HEK293 (cell line): ENCODE measurements at regions of chr20 and their contacts with region 1.

Region 1: GRCh38 chr20:56551571-56551970 is 18.5 kb downstream of the FAM209B start:
- H3K4me3 ChIP-seq: no peak overlapping the region
- H3K27ac ChIP-seq: no peak overlapping the region
- H3K4me1 ChIP-seq: peaks cover 7% of the 10 kb centered on the region; the same call in 1 of the 2 replicates
- CTCF ChIP-seq: no peak

Region 2: GRCh38 chr20:56566271-56566981 is 14.9 kb after region 1 on chr20:
- CTCF ChIA-PET with region 1: interaction called, 11 read pairs
- POLR2A ChIA-PET with region 1: no interaction called
- H3K4me3 ChIP-seq: no peak overlapping the region
- H3K27ac ChIP-seq: no peak overlapping the region
- H3K4me1 ChIP-seq: peaks cover 4% of the 10 kb centered on the region; the same call in 1 of the 2 replicates
- CTCF ChIP-seq: no peak

Region 3: GRCh38 chr20:56574531-56575142 is 23.1 kb after region 1 on chr20:
- CTCF ChIA-PET with region 1: interaction called, 69 read pairs
- POLR2A ChIA-PET with region 1: no interaction called
- H3K4me3 ChIP-seq: no peak overlapping the region
- H3K27ac ChIP-seq: no peak overlapping the region
- H3K4me1 ChIP-seq: no peaks in the 10 kb centered on the region
- CTCF ChIP-seq: no peak

Region 4: GRCh38 chr20:56974499-56975236 is 423.1 kb after region 1 on chr20:
- CTCF ChIA-PET with region 1: interaction called, 18 read pairs
- POLR2A ChIA-PET with region 1: interaction called, 3 read pairs
- H3K4me3 ChIP-seq: no peak overlapping the region
- H3K27ac ChIP-seq: no peak overlapping the region
- H3K4me1 ChIP-seq: no peaks in the 10 kb centered on the region
- CTCF ChIP-seq: peak; percentile 71

Region 5: DNA sequence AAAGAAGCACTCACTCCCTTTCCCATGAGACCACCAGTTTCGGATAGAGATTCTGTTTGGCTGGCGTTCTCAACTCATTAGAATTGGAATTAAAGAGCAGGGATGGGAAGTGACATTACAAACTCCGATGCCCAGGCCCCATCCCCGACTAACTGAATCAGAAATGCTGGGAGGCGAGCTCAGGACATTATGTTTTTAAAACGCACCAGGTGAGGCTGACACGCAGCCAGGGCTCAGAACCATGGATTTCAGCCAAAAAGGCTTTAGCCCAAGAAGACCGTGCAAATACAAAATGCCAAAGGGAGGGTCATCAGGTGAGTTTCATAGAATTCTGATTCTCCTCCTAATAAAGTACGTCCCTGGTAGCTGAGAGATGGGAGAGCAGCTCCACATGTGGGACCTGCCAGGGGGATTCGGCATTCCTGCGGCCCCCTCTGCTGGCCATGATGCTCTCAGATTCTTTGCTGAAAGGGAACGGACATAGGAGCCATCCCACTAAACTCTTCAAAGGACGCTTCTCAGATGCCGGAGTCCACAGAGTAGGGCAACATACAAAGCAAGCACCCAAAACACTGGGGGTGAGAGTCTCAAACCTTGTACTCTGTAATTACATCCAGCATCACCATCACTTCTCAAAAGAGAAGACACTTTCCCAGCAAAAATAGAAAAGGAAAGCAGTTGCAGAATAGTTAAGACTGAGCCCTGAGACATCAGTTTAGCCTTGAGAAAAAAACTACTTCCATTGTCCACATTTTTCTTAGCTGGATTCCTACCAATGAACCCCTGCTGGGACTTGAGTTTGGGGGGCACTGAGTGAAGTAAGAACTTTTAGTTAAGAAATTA is 509.7 kb after region 1 on chr20:
- CTCF ChIA-PET with region 1: interaction called, 38 read pairs
- POLR2A ChIA-PET with region 1: no interaction called
- H3K4me3 ChIP-seq: no peak overlapping the region
- H3K27ac ChIP-seq: no peak overlapping the region
- H3K4me1 ChIP-seq: no peaks in the 10 kb centered on the region
- CTCF ChIP-seq: peak; percentile 62; the same call in 1 of the 2 replicates